ENCODE measurements at regions of chr2 and their contacts with region 1.

Region 1: GRCh38 chr2:44205169-44205568 is 36.5 kb downstream of the PPM1B start:
- DNase-seq: no peak
- H3K4me3 ChIP-seq: no peak overlapping the region
- H3K27ac ChIP-seq: no peak overlapping the region
- H3K4me1 ChIP-seq: peaks cover 7% of the 10 kb centered on the region
- H3K27me3 ChIP-seq: no peaks in the 10 kb centered on the region
- CTCF ChIP-seq: no peak

Region 2: GRCh38 chr2:44148999-44149398 is 56.2 kb before region 1 on chr2:
- CTCF ChIA-PET with region 1: no interaction called
- POLR2A ChIA-PET with region 1: interaction called, 11 read pairs
- intact Hi-C with region 1: no loop called
- DNase-seq: no peak
- H3K4me3 ChIP-seq: no peak overlapping the region
- H3K27ac ChIP-seq: no peak overlapping the region
- H3K4me1 ChIP-seq: no peaks in the 10 kb centered on the region
- H3K27me3 ChIP-seq: no peaks in the 10 kb centered on the region
- CTCF ChIP-seq: no peak

Region 3: GRCh38 chr2:44244129-44244871 is 39.1 kb after region 1 on chr2:
- CTCF ChIA-PET with region 1: no interaction called
- POLR2A ChIA-PET with region 1: no interaction called
- intact Hi-C with region 1: no loop called
- DNase-seq: peak; percentile 85
- H3K4me3 ChIP-seq: peak overlapping the region; percentile 41
- H3K27ac ChIP-seq: no peak overlapping the region
- H3K4me1 ChIP-seq: peaks cover 8% of the 10 kb centered on the region
- H3K27me3 ChIP-seq: no peaks in the 10 kb centered on the region
- CTCF ChIP-seq: peak; percentile 69

Measured in A673 (cell line).